ENCODE measurements at regions of chr2 and their contacts with region 1.

Region 1: GRCh38 chr2:192162392-192163042 is 32.2 kb downstream of the TMEFF2 start:
- DNase-seq: peak; percentile 57 to 70 (median 64)
- H3K4me3 ChIP-seq: no peak overlapping the region
- H3K4me3 Mint-ChIP-seq: peak overlapping the region in 3 of 8 donors; percentile 11 to 43 (median 43)
- H3K27ac ChIP-seq: no peak overlapping the region
- H3K27ac Mint-ChIP-seq: no peak overlapping the region
- H3K4me1 ChIP-seq: peaks cover 9% of the 10 kb centered on the region
- H3K4me1 Mint-ChIP-seq: peaks cover 8 to 11% (median 10%) of the 10 kb centered on the region in 4 donors
- H3K27me3 ChIP-seq: no peaks in the 10 kb centered on the region
- H3K27me3 Mint-ChIP-seq: peaks cover 5 to 13% of the 10 kb centered on the region in 2 donors

Region 2: GRCh38 chr2:191539068-191539467 is 623.4 kb before region 1 on chr2:
- CTCF ChIA-PET with region 1: interaction called, 28 read pairs
- POLR2A ChIA-PET with region 1: no interaction called
- intact Hi-C with region 1: no loop called
- DNase-seq: peak in 3 of 5 donors; percentile 10 to 37 (median 16)
- H3K4me3 ChIP-seq: no peak overlapping the region
- H3K4me3 Mint-ChIP-seq: peak overlapping the region in 1 of 8 donors; percentile 49
- H3K27ac ChIP-seq: no peak overlapping the region
- H3K27ac Mint-ChIP-seq: no peak overlapping the region
- H3K4me1 ChIP-seq: no peaks in the 10 kb centered on the region
- H3K4me1 Mint-ChIP-seq: no peaks in the 10 kb centered on the region
- H3K27me3 ChIP-seq: no peaks in the 10 kb centered on the region
- H3K27me3 Mint-ChIP-seq: peaks cover 2% of the 10 kb centered on the region in 2 donors

Region 3: DNA sequence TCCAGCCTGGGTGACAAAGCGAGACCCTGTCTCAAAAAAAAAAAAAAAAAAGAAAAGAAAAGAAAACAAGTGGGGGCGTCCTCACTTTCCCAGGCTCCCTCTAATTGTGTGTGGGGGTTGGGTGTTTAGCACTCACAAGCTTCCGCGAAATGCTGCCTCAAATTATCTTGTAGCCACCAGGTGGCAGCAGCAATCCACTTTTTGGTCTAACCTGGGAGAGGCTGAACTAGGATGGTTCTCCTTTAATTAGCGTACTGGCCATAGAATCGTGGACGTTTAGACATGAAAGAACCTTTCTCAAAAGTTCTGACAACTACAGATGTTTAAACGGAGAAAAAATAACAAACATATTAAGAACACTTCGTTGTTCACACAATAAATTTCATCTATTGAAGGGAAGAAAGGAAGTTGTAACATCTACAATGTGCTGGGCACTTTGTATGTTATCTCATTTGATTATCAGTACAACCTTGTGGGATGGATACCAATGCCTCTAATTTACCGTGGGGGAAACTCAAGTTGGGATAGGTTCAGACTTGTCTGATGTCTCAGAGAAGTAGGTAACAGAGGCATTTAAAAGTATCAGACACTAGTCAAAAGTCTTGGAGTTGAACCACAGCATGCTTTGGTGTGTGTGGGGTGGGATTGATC is 607.3 kb before region 1 on chr2:
- CTCF ChIA-PET with region 1: interaction called, 237 read pairs
- POLR2A ChIA-PET with region 1: no interaction called
- intact Hi-C with region 1: loop called (anchors 1 kb)
- DNase-seq: peak; percentile 66 to 73 (median 70)
- H3K4me3 ChIP-seq: no peak overlapping the region
- H3K4me3 Mint-ChIP-seq: peak overlapping the region in 1 of 8 donors; percentile 34
- H3K27ac ChIP-seq: no peak overlapping the region
- H3K27ac Mint-ChIP-seq: no peak overlapping the region
- H3K4me1 ChIP-seq: no peaks in the 10 kb centered on the region
- H3K4me1 Mint-ChIP-seq: peaks cover 2 to 5% (median 3%) of the 10 kb centered on the region in 4 donors
- H3K27me3 ChIP-seq: peaks cover 3% of the 10 kb centered on the region
- H3K27me3 Mint-ChIP-seq: peaks cover 14 to 18% of the 10 kb centered on the region in 2 donors

Region 4: DNA sequence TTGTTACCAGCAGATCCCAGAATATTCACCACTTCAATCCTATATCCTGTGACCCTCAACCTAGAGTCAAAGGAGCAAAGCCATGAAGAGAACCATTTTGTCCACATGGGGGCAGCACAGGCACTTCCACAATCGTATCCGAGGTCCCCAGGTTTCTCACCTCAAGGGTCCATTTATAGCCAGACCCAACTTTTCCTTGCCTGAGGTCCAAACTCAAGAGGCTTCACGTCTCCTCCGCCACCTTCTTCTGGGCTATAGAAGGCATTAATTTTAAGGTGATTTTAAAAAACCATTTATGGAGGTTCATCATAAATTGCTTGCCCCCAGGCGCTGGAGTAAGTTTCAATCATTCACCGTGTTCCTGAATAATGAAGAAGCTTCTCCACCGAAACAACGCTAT is 596.2 kb before region 1 on chr2:
- CTCF ChIA-PET with region 1: interaction called, 81 read pairs
- POLR2A ChIA-PET with region 1: interaction called, 3 read pairs
- intact Hi-C with region 1: loop called (anchors 1 kb)
- DNase-seq: peak; percentile 47 to 63 (median 52)
- H3K4me3 ChIP-seq: no peak overlapping the region
- H3K4me3 Mint-ChIP-seq: no peak overlapping the region
- H3K27ac ChIP-seq: no peak overlapping the region
- H3K27ac Mint-ChIP-seq: no peak overlapping the region
- H3K4me1 ChIP-seq: peaks cover 19% of the 10 kb centered on the region
- H3K4me1 Mint-ChIP-seq: peaks cover 15 to 33% (median 25%) of the 10 kb centered on the region in 4 donors
- H3K27me3 ChIP-seq: peaks cover 3% of the 10 kb centered on the region
- H3K27me3 Mint-ChIP-seq: peaks cover 11 to 21% of the 10 kb centered on the region in 2 donors

Region 5: DNA sequence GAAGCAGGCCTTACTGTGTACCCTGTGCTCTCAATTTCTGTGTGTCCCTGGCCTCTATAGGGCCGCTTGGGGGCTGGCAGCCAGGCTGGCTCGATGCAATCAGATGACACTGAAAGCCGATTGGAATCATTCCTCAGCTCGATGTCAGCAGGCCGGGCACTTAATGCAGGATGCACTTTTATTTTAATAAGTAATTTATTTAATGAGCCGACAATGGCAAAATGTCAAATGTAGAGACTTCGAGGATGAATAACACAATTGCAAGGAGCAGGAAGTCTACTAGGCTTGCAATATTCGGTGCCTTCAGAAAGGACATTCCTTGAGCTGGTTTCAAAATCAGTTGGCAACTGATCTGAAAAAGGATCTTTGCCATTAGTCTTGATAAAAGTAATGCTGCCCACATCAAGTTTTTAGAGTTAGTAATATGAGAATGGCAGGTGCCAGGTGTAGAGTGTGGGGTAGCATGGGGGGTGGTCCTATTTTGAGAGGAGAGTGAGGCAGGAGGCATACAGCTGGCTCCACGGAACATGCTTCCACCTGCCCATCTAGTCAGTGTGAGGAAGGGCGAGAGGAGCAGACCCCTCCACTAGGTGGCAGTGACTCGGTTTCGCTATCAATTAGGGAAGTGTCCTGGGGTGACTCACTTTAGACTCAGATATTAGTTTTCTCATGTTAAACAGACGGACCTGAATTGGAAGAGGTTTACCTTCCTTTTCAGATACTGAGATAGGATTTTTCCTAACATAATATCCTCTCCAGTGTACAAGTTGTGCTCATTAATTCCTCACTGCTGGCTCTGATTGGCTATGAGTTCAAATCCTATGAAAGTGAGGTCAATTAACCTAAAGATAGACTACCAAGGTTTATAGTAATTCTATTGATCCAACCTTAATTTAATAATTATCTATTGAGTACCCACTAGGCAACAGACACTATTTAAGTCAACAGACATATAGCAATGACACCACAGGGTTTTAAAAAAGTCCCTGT is 403.7 kb before region 1 on chr2:
- CTCF ChIA-PET with region 1: interaction called, 6 read pairs
- POLR2A ChIA-PET with region 1: no interaction called
- intact Hi-C with region 1: loop called (anchors 2 kb)
- DNase-seq: peak; percentile 23 to 57 (median 35)
- H3K4me3 ChIP-seq: no peak overlapping the region
- H3K4me3 Mint-ChIP-seq: peak overlapping the region in 3 of 8 donors; percentile 12 to 32 (median 18)
- H3K27ac ChIP-seq: no peak overlapping the region
- H3K27ac Mint-ChIP-seq: no peak overlapping the region
- H3K4me1 ChIP-seq: peaks cover 11% of the 10 kb centered on the region
- H3K4me1 Mint-ChIP-seq: peaks cover 4 to 6% (median 5%) of the 10 kb centered on the region in 4 donors
- H3K27me3 ChIP-seq: peaks cover 3% of the 10 kb centered on the region
- H3K27me3 Mint-ChIP-seq: peaks cover 8 to 13% of the 10 kb centered on the region in 2 donors

Region 6: GRCh38 chr2:192140236-192140839 is 22.2 kb before region 1 on chr2:
- CTCF ChIA-PET with region 1: interaction called, 11 read pairs
- POLR2A ChIA-PET with region 1: no interaction called
- intact Hi-C with region 1: no loop called
- DNase-seq: no peak
- H3K4me3 ChIP-seq: no peak overlapping the region
- H3K4me3 Mint-ChIP-seq: no peak overlapping the region
- H3K27ac ChIP-seq: no peak overlapping the region
- H3K27ac Mint-ChIP-seq: no peak overlapping the region
- H3K4me1 ChIP-seq: no peaks in the 10 kb centered on the region
- H3K4me1 Mint-ChIP-seq: no peaks in the 10 kb centered on the region
- H3K27me3 ChIP-seq: no peaks in the 10 kb centered on the region
- H3K27me3 Mint-ChIP-seq: peaks cover 6 to 12% of the 10 kb centered on the region in 2 donors